CD8-positive, alpha-beta T cell (primary cell): ENCODE measurements at regions of chr13 and their contacts with region 1.

Region 1: DNA sequence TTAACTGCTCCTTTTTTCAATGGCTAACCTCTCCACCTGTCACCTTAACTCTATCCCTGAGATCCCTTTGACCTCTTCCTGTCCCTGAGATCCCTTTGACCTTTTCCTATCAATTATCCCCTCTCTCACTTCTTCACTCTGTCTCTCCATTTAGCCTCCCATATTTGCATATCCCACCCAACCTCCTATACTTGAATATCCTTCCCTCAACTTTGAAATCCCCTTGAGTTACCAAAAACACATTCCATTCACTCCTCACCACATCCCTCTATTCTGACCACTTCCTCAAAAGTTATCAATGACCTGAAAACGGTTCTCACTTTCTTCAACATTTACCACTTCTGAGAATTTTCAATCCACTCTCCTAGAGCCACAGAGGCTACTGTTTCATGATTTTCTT is 3.0 kb downstream of the MYCBP2 start:
- DNase-seq: peak in 1 of 9 experiments; percentile 35
- ATAC-seq: no peak
- H3K4me3 ChIP-seq: no peak overlapping the region
- H3K4me3 Mint-ChIP-seq: peak overlapping the region; percentile 99
- H3K27ac ChIP-seq: no peak overlapping the region
- H3K27ac Mint-ChIP-seq: peak overlapping the region; percentile 95
- H3K4me1 ChIP-seq: peaks cover 79% of the 10 kb centered on the region
- H3K4me1 Mint-ChIP-seq: peaks cover 84% of the 10 kb centered on the region
- H3K27me3 ChIP-seq: no peaks in the 10 kb centered on the region
- H3K27me3 Mint-ChIP-seq: no peaks in the 10 kb centered on the region
- CTCF ChIP-seq: no peak

Region 2: GRCh38 chr13:75537401-75538365 is 1786.2 kb before region 1 on chr13 and contains the start of gene COMMD6:
- CTCF ChIA-PET with region 1: no interaction called
- POLR2A ChIA-PET with region 1: no interaction called
- intact Hi-C with region 1: loop called in 1 of 2 experiments (anchors 5 kb)
- DNase-seq: peak; percentile 34 to 86 (median 68)
- ATAC-seq: peak; percentile 94
- H3K4me3 ChIP-seq: peak within 1 kb of the TSS; percentile 71 to 87
- H3K4me3 Mint-ChIP-seq: peak within 1 kb of the TSS; percentile 98
- H3K27ac ChIP-seq: peak within 1 kb of the TSS; percentile 43 to 71
- H3K27ac Mint-ChIP-seq: peak within 1 kb of the TSS; percentile 96
- H3K4me1 ChIP-seq: peaks cover 14% of the 10 kb centered on the region
- H3K4me1 Mint-ChIP-seq: peaks cover 46% of the 10 kb centered on the region
- H3K27me3 ChIP-seq: no peaks in the 10 kb centered on the region
- H3K27me3 Mint-ChIP-seq: no peaks in the 10 kb centered on the region
- CTCF ChIP-seq: no peak
- total RNA-seq, gene COMMD6: 191 to 204 TPM